BJ (cell line): ENCODE measurements at regions of chr9 and their contacts with region 1.

Region 1: GRCh38 chr9:114906908-114907571 is 23.4 kb downstream of the TNFSF8 start:
- DNase-seq: no peak
- H3K4me3 ChIP-seq: no peak overlapping the region
- H3K27me3 ChIP-seq: no peaks in the 10 kb centered on the region
- CTCF ChIP-seq: peak; percentile 75

Region 2: GRCh38 chr9:114662081-114662989 is 244.7 kb before region 1 on chr9:
- CTCF ChIA-PET with region 1: interaction called, 28 read pairs
- POLR2A ChIA-PET with region 1: no interaction called
- DNase-seq: no peak
- H3K4me3 ChIP-seq: no peak overlapping the region
- H3K27me3 ChIP-seq: peaks cover 8% of the 10 kb centered on the region
- CTCF ChIP-seq: peak; percentile 89

Region 3: GRCh38 chr9:114745108-114745848 is 161.8 kb before region 1 on chr9:
- CTCF ChIA-PET with region 1: interaction called, 184 read pairs
- POLR2A ChIA-PET with region 1: no interaction called
- DNase-seq: no peak
- H3K4me3 ChIP-seq: no peak overlapping the region
- H3K27me3 ChIP-seq: 0 out of 2 replicates have a peak, but pooled peaks cover 2% of the 10 kb centered on the region
- CTCF ChIP-seq: no peak

Region 4: DNA sequence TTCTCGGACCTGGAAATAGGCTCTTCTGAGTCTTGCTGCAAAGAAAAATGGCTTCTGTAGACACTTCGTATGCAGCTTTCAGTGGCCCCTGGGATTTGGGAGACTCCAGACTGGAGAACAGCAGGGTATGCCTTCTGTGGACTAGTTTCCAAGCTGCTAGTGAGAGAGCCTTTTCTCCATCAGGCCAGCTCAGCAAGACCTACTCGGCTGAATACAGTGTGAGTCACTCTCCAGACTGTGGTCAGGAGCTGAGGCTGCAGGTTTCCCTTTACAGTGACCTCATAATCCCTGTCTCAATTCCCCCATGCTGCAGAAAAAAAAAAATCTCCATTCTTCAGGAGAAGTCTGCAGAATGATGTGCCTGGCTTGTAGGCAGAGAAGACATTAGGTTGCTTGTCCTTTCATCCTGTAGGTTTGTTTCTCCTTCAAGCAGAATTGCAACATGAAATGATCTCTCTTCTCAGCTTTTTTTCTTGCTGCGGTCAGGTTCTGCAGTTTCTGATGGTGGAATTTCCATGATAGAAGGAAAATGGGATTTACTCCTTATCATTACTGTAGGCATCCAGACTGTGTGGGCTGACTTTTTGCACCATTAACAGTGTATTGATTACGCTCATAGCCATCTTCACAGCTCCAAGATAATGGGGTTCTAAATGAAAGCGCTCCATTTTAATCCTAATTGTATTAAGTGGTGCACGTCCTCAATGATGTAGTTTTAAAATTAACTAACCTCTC is 101.7 kb after region 1 on chr9:
- CTCF ChIA-PET with region 1: interaction called, 49 read pairs
- POLR2A ChIA-PET with region 1: no interaction called
- DNase-seq: peak; percentile 52
- H3K4me3 ChIP-seq: no peak overlapping the region
- H3K27me3 ChIP-seq: peaks cover 5% of the 10 kb centered on the region
- CTCF ChIP-seq: no peak